Naive thymus-derived CD4-positive, alpha-beta T cell (primary cell): ENCODE measurements at regions of chr19 and their contacts with region 1.

Region 1: GRCh38 chr19:2529473-2529918 is 53.6 kb downstream of the GADD45B start:
- DNase-seq: no peak
- ATAC-seq: no peak
- H3K4me3 ChIP-seq: no peak overlapping the region
- H3K4me3 Mint-ChIP-seq: no peak overlapping the region
- H3K27ac ChIP-seq: no peak overlapping the region
- H3K27ac Mint-ChIP-seq: no peak overlapping the region
- H3K4me1 ChIP-seq: peaks cover 3 to 7% of the 10 kb centered on the region in 2 donors
- H3K4me1 Mint-ChIP-seq: peaks cover 13 to 22% (median 14%) of the 10 kb centered on the region in 7 donors
- H3K27me3 ChIP-seq: no peaks in the 10 kb centered on the region
- H3K27me3 Mint-ChIP-seq: no peaks in the 10 kb centered on the region

Region 2: DNA sequence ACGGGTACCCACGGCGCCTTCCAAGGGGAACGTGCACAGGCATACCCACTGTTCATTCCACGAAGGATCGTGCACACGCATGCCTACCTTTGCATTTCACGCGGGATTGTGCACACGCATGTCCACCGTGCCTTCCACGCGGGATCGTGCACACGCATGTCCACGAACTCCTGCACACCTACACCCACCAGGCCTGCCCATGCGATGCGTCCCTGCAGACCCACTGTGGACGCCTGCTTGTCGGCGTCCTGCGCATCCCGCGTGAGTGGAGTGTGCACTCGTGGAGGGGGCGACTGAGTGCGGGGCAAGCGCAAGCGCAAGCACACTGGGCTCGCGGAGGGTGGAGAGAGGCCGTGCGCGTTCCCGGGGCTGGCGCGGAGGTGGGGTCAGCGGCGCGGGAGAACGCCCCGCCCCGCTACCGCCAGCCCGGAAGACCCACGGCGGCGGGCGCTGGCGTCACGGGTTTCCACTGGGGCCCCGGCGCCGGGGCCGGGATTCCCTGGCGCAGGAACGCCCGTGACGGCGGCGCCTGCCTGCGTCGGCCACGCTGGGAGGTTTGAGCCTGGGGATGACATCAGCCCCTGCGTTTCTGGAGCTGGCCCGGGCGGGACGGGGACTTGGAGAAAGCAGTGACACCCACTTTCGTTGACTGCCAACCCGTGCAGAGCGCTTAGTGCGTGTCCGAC is 34.9 kb before region 1 on chr19:
- CTCF ChIA-PET with region 1: no interaction called
- POLR2A ChIA-PET with region 1: no interaction called
- intact Hi-C with region 1: loop called in 1 of 2 experiments (anchors 5 kb)
- DNase-seq: peak in 8 of 9 donors; percentile 22 to 75 (median 33)
- ATAC-seq: peak; percentile 73
- H3K4me3 ChIP-seq: peak overlapping the region; percentile 77
- H3K4me3 Mint-ChIP-seq: peak overlapping the region; percentile 67 to 87 (median 77)
- H3K27ac ChIP-seq: peak overlapping the region; percentile 69
- H3K27ac Mint-ChIP-seq: peak overlapping the region in 4 of 9 donors; percentile 19 to 65 (median 43)
- H3K4me1 ChIP-seq: peaks cover 7 to 14% of the 10 kb centered on the region in 2 donors
- H3K4me1 Mint-ChIP-seq: peaks cover 4 to 38% (median 30%) of the 10 kb centered on the region in 7 donors
- H3K27me3 ChIP-seq: peaks cover 2 to 4% of the 10 kb centered on the region in 2 donors
- H3K27me3 Mint-ChIP-seq: peaks cover 20 to 52% (median 24%) of the 10 kb centered on the region in 5 donors

Region 3: DNA sequence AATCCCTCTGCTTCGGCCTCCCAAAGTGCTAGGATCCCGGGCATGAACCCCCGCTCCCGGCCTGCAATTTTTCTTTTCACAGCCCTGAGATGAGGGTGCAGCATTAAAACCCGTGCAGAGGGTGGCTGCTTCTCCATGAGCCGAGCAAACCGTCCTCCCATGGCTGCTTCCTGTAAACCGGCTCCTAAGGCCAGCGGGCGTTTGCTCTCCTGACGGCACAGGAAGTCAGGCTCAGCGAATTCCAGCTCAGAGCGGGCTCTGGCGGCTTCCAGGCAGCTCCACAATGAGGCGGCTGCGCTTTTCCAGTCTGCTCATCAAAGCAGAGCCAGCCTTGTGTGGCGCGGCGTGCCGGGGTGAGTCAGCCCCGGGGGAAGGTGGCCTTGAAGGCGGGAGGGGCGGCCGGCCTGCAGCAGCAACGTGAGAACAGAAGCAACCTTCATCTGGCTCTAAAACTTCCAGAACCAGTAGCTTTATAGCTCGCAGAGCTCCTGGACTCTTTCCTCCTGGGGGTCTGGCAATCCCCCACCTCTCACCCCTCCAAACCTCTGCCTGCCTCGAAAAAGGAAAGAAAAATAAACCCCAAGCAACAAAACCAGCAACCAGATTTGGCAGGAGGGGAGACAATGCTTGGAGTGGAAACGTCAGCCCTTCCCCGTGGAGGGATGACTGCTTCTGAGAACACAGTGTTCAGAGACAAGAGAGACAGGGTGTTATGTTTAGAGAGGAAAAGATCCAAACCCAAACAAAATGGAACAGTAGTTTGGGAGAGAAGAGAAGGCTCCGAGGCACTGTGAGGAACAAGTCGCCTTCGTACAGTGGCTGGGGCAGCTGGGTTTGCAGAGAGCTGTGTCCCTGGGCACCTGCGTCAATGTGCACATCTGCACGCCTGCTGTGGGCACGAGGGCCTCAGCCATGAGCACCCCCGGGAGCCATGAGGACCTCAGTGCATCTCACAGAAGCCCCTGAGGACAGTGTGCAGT is 14.3 kb after region 1 on chr19:
- CTCF ChIA-PET with region 1: no interaction called
- POLR2A ChIA-PET with region 1: interaction called, 10 read pairs
- intact Hi-C with region 1: no loop called
- DNase-seq: peak in 8 of 9 donors; percentile 16 to 69 (median 36)
- ATAC-seq: peak; percentile 80
- H3K4me3 ChIP-seq: peak overlapping the region; percentile 38
- H3K4me3 Mint-ChIP-seq: peak overlapping the region; percentile 55 to 83 (median 74)
- H3K27ac ChIP-seq: no peak overlapping the region
- H3K27ac Mint-ChIP-seq: peak overlapping the region in 8 of 9 donors; percentile 42 to 88 (median 68)
- H3K4me1 ChIP-seq: peaks cover 4 to 6% of the 10 kb centered on the region in 2 donors
- H3K4me1 Mint-ChIP-seq: peaks cover 10 to 28% (median 15%) of the 10 kb centered on the region in 7 donors
- H3K27me3 ChIP-seq: no peaks in the 10 kb centered on the region
- H3K27me3 Mint-ChIP-seq: no peaks in the 10 kb centered on the region